Left colon (tissue), 2 donors: ENCODE measurements at regions of chr6 and their contacts with region 1.

Region 1: DNA sequence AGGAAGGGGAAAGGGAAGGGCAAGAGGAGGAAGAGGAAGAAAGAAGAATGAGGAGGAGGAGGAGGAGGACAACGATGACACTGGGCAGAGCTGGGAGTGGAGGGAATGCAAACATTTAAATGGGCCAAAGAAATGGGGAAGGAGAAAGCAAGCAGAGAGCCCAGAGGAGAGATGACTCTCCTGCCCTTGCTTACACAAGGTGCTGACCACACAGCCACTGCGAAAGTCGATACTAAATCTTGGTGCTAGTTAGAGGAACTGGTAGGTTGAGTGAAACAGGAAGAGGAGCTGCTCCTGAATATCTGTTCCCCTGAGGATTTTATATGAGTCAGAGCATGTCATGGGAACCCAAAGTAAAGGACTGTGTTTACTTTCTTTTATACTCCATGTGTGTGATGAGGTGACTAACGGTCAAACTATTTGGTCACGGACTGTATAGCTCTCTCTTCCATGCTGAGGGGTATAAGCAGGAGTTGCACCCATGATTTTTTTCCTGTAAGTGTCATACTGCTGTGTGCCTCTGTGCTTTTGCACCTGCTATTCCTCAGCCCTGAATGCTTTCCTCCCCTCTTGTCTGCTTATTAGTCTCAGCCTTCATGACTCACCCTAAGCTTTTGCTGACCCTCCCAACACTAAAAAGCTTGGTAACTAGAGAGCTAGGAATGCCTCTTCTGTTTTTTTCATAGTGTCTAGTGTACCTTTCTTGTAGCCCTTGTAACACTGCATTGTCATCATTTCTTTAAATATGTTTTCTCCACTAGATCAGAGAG is 9.5 kb upstream of the PAQR8 start:
- DNase-seq: peak in 1 of 2 donors; percentile 53
- ATAC-seq: peak; percentile 79

Region 2: DNA sequence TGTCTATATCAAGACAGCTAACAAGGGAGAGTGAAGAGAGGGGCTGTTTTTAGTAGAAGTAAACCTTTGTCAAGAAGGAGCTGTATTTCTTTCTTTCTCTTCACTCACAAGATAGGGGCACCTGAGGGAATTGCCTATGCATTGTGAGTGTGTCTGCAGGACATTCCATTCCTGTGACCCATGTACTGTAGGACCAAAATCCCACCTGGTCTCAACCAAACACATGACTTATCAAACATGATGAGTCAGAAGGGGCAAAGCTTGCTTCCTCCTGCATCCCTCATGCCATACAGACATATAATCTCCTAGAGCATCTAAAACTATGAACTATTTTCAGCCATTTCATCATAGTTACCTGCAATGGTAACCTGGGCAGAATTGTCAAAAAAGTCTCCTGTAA is 286.8 kb before region 1 on chr6:
- intact Hi-C with region 1: no loop called
- DNase-seq: no peak
- ATAC-seq: no peak

Region 3: GRCh38 chr6:52297433-52297832 is 55.0 kb before region 1 on chr6:
- intact Hi-C with region 1: loop called in 1 of 2 experiments (anchors 10 kb)
- DNase-seq: no peak
- ATAC-seq: no peak

Region 4: DNA sequence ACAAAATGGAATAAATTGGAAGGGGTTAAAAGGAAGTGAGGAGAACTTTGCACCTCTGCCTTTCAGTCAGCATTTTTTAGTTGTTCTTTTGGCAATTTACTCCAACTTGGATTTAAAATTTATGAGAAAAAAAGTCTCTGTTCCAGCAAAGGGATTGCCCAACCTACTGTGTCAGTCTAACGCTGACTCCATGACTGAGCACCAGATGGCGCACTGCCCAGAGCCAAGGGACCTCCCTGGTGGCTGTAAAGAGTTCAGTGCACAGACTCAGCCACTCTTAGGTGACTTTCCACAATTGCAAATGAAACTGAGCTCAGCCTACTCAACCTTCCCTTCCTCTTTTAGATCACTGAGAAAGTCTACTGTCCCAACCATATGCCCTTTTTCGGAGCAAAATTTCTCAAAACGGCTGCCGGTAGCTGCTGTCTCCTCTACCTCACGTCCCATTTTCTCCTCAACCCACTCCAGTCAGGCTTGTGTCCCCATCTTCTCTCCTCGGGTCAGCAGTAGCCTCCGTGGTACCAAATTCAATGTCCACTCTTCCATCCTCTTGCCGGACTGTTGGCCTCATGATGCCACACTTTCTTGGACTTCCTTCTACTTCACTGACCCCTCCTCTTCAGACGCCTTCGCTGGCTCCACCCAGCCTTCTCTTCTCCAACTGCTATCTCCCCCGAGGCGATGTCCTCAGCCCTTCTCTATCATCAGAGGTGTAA is 372.1 kb after region 1 on chr6:
- intact Hi-C with region 1: no loop called
- DNase-seq: peak; percentile 76 to 84
- ATAC-seq: peak; percentile 80